Esophagus muscularis mucosa (tissue), 4 donors: ENCODE measurements at regions of chr2 and their contacts with region 1.

Region 1: GRCh38 chr2:108583903-108584520 is 49.7 kb downstream of the LIMS1 start:
- DNase-seq: no peak
- H3K4me3 ChIP-seq: no peak overlapping the region
- H3K27ac ChIP-seq: peak overlapping the region in 2 of 4 donors; percentile 2 to 21
- H3K4me1 ChIP-seq: peaks cover 44 to 70% (median 69%) of the 10 kb centered on the region in 4 donors
- H3K27me3 ChIP-seq: no peaks in the 10 kb centered on the region
- CTCF ChIP-seq: peak; percentile 70 to 81 (median 79)
- EP300 ChIP-seq: no peak
- POLR2A ChIP-seq: no peak

Region 2: GRCh38 chr2:108034849-108035248 is 549.2 kb before region 1 on chr2:
- intact Hi-C with region 1: no loop called
- DNase-seq: no peak
- H3K4me3 ChIP-seq: no peak overlapping the region
- H3K27ac ChIP-seq: no peak overlapping the region
- H3K4me1 ChIP-seq: no peaks in the 10 kb centered on the region
- H3K27me3 ChIP-seq: no peaks in the 10 kb centered on the region
- CTCF ChIP-seq: no peak
- EP300 ChIP-seq: no peak
- POLR2A ChIP-seq: no peak

Region 3: GRCh38 chr2:108351889-108352288 is 232.1 kb before region 1 on chr2:
- intact Hi-C with region 1: loop called (anchors 10 kb)
- DNase-seq: no peak
- H3K4me3 ChIP-seq: no peak overlapping the region
- H3K27ac ChIP-seq: no peak overlapping the region
- H3K4me1 ChIP-seq: no peaks in the 10 kb centered on the region
- H3K27me3 ChIP-seq: no peaks in the 10 kb centered on the region
- CTCF ChIP-seq: no peak
- EP300 ChIP-seq: no peak
- POLR2A ChIP-seq: no peak

Region 4: DNA sequence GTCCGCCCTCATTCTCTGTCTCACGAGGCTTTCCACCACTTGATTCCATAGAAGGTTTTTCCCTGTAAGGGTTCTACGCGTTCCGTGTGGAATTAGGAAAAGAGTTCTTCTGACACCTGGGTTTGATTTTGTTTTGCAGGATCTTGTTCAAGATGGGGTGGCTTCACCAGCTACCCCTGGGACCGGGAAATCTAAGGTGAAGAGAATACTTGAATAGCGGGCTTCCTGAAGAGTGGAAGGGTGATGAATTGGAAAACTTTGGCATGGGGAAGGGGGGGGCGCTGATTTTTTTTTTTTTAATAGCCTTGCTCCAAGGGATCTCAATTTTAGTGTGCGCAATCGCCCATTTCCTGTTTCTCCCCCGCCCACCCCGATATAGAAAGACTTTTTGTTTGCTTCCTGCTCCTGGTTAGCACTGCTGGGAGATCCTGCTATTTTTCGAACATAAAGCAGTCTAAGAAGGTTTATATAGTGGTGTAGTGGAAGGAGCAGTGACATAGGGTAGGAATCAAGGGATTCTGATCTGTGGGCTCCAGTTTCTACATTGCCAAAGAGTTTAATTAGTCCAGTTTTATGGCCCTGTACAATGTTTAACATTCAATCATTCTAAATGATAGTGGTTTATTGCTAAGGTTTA is 134.4 kb before region 1 on chr2:
- intact Hi-C with region 1: loop called (anchors 5 kb)
- DNase-seq: no peak
- H3K4me3 ChIP-seq: peak overlapping the region; percentile 85
- H3K27ac ChIP-seq: peak overlapping the region; percentile 89 to 92 (median 90)
- H3K4me1 ChIP-seq: peaks cover 11 to 19% (median 16%) of the 10 kb centered on the region in 4 donors
- H3K27me3 ChIP-seq: no peaks in the 10 kb centered on the region
- CTCF ChIP-seq: peak in 1 of 3 experiments; percentile 6
- EP300 ChIP-seq: no peak
- POLR2A ChIP-seq: no peak

Region 5: GRCh38 chr2:108533832-108534583 is 50.0 kb before region 1 on chr2 and contains the start of gene LIMS1:
- intact Hi-C with region 1: loop called (anchors 2 kb)
- DNase-seq: peak; percentile 97
- H3K4me3 ChIP-seq: peak within 1 kb of the TSS; percentile 64 to 98 (median 82)
- H3K27ac ChIP-seq: peak within 1 kb of the TSS; percentile 90 to 98 (median 96)
- H3K4me1 ChIP-seq: peaks cover 13 to 41% (median 37%) of the 10 kb centered on the region in 4 donors
- H3K27me3 ChIP-seq: no peaks in the 10 kb centered on the region
- CTCF ChIP-seq: peak in 2 of 3 experiments; percentile 4 to 20
- EP300 ChIP-seq: no peak
- POLR2A ChIP-seq: peak; percentile 73
- total RNA-seq, gene LIMS1: 71.0 to 141 (median 123) TPM